Psoas muscle (tissue), 8 donors: ENCODE measurements at regions of chr2 and their contacts with region 1.

Region 1: DNA sequence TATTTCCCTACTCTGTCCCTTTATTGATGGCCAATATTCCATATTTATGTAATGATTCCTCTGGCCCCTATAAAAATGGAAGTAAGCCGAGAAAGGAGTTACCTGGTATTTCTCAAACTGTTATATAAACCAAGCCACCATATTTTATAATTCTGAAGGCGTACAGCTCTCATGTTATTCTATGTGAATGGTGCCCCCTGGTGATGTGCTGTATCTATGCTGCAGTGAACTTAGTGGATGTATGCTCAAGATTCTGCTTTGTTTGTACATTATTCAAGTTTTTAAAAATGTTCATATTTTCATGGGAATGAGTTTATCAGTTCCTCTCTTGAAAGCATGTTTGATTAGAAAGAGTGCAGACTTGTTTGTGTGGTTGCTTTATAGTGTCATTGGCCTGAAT is 194.5 kb upstream of the LRRTM1 start:
- DNase-seq: no peak
- ATAC-seq: no peak
- H3K4me3 ChIP-seq: no peak overlapping the region
- H3K27ac ChIP-seq: no peak overlapping the region
- H3K4me1 ChIP-seq: no peaks in the 10 kb centered on the region
- H3K27me3 ChIP-seq: no peaks in the 10 kb centered on the region
- CTCF ChIP-seq: peak; percentile 40

Region 2: DNA sequence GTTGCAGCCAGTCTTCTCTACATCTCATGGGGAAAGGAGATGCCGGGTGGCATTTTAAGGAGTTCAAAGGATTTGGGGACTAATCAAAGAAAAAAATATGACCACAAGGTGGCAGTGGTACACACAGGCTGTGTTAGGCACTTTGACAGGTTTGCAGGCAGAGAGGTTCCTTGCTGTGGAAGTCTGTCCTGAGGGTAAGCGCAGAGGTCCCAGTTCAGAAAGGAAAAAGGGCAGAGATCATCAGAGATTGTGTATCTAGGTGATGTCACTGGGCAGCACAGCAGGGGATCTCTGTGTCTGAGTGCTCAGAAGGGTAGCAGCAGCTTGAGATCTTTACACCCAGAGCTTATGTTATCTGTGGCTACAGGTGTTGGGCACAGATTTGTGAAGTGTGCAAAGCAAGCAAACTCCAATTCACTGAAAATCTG is 425.9 kb before region 1 on chr2:
- intact Hi-C with region 1: loop called (anchors 5 kb)
- DNase-seq: no peak
- ATAC-seq: peak in 1 of 4 donors; percentile 54
- H3K4me3 ChIP-seq: no peak overlapping the region
- H3K27ac ChIP-seq: no peak overlapping the region
- H3K4me1 ChIP-seq: no peaks in the 10 kb centered on the region
- H3K27me3 ChIP-seq: no peaks in the 10 kb centered on the region
- CTCF ChIP-seq: peak; percentile 55

Region 3: GRCh38 chr2:80326214-80326613 is 172.9 kb before region 1 on chr2:
- intact Hi-C with region 1: loop called in 1 of 2 experiments (anchors 5 kb)
- DNase-seq: no peak
- ATAC-seq: no peak
- H3K4me3 ChIP-seq: no peak overlapping the region
- H3K27ac ChIP-seq: no peak overlapping the region
- H3K4me1 ChIP-seq: no peaks in the 10 kb centered on the region
- H3K27me3 ChIP-seq: peaks cover 2 to 22% (median 11%) of the 10 kb centered on the region in 3 donors
- CTCF ChIP-seq: peak; percentile 35

Region 4: GRCh38 chr2:80545420-80546210 is 46.5 kb after region 1 on chr2:
- intact Hi-C with region 1: no loop called
- DNase-seq: no peak
- ATAC-seq: no peak
- H3K4me3 ChIP-seq: no peak overlapping the region
- H3K27ac ChIP-seq: no peak overlapping the region
- H3K4me1 ChIP-seq: no peaks in the 10 kb centered on the region
- H3K27me3 ChIP-seq: no peaks in the 10 kb centered on the region
- CTCF ChIP-seq: no peak

Region 5: DNA sequence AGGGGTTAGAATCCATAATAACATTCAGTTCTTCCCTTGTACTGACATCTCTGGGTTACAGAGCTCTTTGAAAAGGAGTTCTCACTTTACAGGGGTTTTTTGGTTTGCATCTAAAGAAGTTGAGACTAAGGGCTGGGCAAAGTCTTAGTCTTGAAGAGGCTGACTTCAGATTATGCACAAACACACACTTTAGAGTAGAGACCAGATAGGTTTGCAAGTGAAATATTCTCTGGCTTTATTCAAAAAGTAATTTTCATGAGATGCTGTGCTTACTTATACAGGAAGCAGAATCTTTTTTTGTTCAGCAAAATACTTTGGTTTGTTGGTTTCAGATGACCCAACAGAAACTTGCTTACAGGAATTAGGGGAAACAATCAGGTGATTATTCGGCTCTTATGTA is 216.3 kb after region 1 on chr2:
- intact Hi-C with region 1: no loop called
- DNase-seq: no peak
- ATAC-seq: no peak
- H3K4me3 ChIP-seq: no peak overlapping the region
- H3K27ac ChIP-seq: no peak overlapping the region
- H3K4me1 ChIP-seq: no peaks in the 10 kb centered on the region
- H3K27me3 ChIP-seq: no peaks in the 10 kb centered on the region
- CTCF ChIP-seq: no peak